OCI-LY7 (cell line): ENCODE measurements at regions of chr19 and their contacts with region 1.

Region 1: GRCh38 chr19:45711851-45712698 is 18.6 kb downstream of the FBXO46 start:
- DNase-seq: no peak
- H3K4me3 ChIP-seq: no peak overlapping the region
- H3K27ac ChIP-seq: no peak overlapping the region
- H3K4me1 ChIP-seq: peaks cover 59% of the 10 kb centered on the region
- CTCF ChIP-seq: no peak

Region 2: DNA sequence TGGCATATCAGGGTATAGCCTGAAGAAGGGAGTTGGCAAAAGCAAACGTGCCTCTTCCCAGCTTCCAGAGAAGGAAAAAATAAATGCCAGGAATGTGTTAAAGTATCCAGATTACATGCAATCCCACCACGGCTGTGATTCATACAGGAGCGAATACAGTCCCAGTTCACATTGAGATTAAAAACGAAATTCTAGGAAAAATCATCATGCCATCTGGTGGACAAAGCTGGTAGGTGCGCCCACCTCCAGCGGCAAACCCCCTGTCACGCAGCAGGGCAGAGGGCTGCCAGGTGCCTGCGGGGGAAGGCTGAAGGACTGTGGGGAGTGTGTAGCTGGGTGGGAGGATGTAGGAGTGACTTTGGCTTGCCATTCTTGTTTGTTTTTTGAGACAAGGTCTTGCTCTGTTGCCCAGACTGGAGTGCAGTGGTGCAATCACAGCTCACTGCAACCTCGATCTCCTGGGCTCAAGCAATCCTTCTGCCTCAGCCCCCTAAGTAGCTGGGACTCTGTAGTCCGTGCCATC is 87.0 kb after region 1 on chr19:
- CTCF ChIA-PET with region 1: no interaction called
- POLR2A ChIA-PET with region 1: interaction called, 10 read pairs
- intact Hi-C with region 1: no loop called
- DNase-seq: peak; percentile 70
- H3K4me3 ChIP-seq: no peak overlapping the region
- H3K27ac ChIP-seq: no peak overlapping the region
- H3K4me1 ChIP-seq: peaks cover 11% of the 10 kb centered on the region
- CTCF ChIP-seq: peak; percentile 87